ENCODE measurements at regions of chr6 and their contacts with region 1.

Region 1: DNA sequence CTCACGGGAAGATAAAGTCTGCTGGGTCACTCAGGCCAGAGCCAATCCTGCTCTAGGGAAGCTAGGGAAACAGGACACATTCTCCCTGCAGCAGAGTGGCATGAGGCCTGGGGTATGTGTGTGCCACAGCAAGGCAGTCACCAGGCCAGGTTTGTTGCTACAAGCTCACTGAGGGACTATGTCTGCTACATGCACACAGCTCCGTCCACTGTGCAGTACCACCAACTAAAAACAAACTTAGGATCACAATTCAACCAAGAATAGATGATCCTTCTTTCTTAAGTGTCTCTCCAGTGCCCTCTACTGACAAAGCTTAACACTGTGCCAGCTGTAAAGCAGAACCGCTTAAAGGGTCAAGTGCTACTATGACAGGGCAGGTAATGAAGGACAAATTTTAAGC is 192.5 kb downstream of the PTPRK start:
- DNase-seq: peak; percentile 4
- CTCF ChIP-seq: peak; percentile 78

Region 2: GRCh38 chr6:127737009-127737486 is 590.8 kb before region 1 on chr6:
- in situ Hi-C with region 1: loop called (anchors 25 kb)
- DNase-seq: peak; percentile 21
- CTCF ChIP-seq: peak; percentile 54

Region 3: DNA sequence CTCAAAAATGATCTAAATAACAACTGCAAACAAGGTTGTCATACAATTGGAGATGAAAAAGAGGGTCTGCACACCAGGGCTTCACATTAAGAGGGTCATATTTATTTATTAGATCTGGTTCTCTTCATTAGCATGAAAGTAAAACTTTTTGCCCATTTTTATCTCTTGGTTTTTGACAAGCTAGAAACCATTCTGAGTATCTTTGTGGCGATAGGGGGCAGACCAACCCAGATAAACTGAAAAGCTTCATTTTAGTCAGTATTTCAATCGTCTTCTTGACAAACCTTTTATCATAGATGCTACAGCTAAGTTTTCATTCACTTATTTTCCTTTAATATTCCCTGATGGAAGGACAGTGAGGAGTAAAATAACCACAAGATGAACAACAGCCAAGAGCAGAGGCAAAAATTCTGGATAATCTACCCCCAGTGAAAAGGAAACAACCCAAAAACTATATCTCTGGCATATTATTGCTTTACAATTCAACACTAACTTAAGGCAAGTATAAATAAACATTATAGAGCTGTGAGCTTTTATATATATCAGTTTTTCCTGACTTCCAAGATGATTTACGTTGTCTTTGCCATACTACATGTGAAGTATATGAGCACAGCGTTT is 472.2 kb before region 1 on chr6:
- in situ Hi-C with region 1: loop called (anchors 25 kb)
- DNase-seq: no peak
- CTCF ChIP-seq: peak; percentile 31